ENCODE measurements at regions of chr3 and their contacts with region 1.

Region 1: GRCh38 chr3:57755668-57756527 is at the start of gene SLMAP:
- DNase-seq: peak; percentile 100
- total RNA-seq, gene SLMAP: 578 TPM

Region 2: GRCh38 chr3:57597122-57597923 is 158.6 kb before region 1 on chr3 and contains the start of gene ARF4:
- intact Hi-C with region 1: loop called (anchors 1 kb)
- DNase-seq: peak; percentile 99
- total RNA-seq, gene ARF4: 103 TPM

Region 3: GRCh38 chr3:57692259-57693147 is 63.4 kb before region 1 on chr3 and contains the start of gene DENND6A:
- intact Hi-C with region 1: loop called (anchors 1 kb)
- DNase-seq: peak; percentile 98
- total RNA-seq, gene DENND6A: 22.1 TPM